GM12878 (cell line): ENCODE measurements at regions of chr6 and their contacts with region 1.

Region 1: DNA sequence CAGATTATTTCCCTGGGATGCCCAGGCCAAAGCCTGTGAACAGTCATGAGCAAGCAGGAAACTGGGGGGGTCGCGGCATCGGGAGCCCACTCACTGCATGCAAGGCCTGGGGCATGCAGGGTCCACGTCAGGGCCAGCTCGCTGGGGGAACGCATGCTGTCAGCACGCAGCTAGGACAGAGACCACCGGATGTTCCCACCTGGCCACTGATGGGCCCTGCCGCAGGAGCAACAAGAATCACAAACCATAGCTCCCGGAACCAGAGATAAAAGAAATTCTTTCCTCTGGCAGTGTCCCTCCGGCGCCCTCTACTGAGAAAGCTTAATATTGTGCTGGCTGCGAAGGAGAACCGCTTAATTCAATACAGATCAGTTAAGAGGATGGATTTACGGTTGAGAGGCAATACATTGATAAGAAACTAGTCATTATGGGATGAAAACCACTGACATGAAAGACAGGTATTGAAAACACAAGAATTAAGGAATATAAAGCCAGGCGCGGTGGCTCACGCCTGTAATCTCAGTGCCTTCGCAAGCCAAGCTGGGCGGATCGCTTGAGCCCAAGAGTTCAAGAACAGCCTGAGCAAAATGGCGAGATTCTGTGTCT is 32.6 kb downstream of the C6orf15 start:
- DNase-seq: no peak
- ATAC-seq: peak; percentile 87
- H3K4me3 ChIP-seq: no peak overlapping the region
- H3K27ac ChIP-seq: no peak overlapping the region
- H3K4me1 ChIP-seq: no peaks in the 10 kb centered on the region
- H3K27me3 ChIP-seq: no peaks in the 10 kb centered on the region
- CTCF ChIP-seq: peak; percentile 74 to 85 (median 79)
- EP300 ChIP-seq: no peak
- POLR2A ChIP-seq: no peak
- RAD21 ChIP-seq: peak; percentile 85

Region 2: GRCh38 chr6:31058128-31058894 is 21.4 kb before region 1 on chr6:
- CTCF ChIA-PET with region 1: interaction called, 27 read pairs
- POLR2A ChIA-PET with region 1: no interaction called
- RAD21 ChIA-PET with region 1: no interaction called
- SMC1A ChIA-PET with region 1: interaction called, 4 read pairs
- in situ Hi-C with region 1: no loop called
- intact Hi-C with region 1: no loop called
- DNase-seq: no peak
- ATAC-seq: peak; percentile 68
- H3K4me3 ChIP-seq: no peak overlapping the region
- H3K27ac ChIP-seq: no peak overlapping the region
- H3K4me1 ChIP-seq: no peaks in the 10 kb centered on the region
- H3K27me3 ChIP-seq: no peaks in the 10 kb centered on the region; a peak in 1 of 4 replicates
- CTCF ChIP-seq: peak; percentile 42 to 57 (median 53)
- EP300 ChIP-seq: no peak
- POLR2A ChIP-seq: no peak
- RAD21 ChIP-seq: no peak

Region 3: DNA sequence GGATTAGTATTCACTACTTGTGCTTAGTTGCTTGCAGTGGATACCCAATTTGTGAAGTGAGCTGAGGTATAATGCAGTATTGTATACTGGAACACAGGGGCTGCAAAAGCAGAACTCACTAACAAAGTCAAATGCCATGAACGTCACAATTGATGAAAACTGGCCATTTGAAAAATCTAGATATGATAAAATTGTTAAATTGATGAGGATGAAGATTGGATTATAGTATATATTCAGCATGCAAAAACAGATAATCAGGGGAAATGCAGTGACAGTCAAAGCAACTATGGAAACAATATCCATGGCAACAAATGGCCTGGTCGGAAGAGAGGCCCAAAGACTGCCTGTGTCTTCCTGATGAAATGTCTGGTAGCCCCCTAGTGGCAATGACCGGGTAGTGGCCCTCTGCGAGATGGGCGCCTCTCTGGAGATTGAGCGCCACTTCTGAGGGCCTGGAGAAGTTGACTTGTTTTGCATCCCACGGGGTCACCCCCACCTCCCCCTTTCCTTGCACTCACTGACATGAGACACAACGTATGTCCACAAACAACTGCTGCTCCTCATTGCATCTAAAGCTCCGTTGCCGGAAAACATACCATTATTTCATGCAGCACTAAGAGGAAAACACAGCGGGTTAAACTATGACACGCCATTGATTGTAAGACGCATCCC is 11.0 kb before region 1 on chr6:
- CTCF ChIA-PET with region 1: interaction called, 29 read pairs
- POLR2A ChIA-PET with region 1: interaction called, 4 read pairs
- RAD21 ChIA-PET with region 1: interaction called, 13 read pairs
- SMC1A ChIA-PET with region 1: interaction called, 15 read pairs
- in situ Hi-C with region 1: no loop called
- intact Hi-C with region 1: no loop called
- DNase-seq: no peak
- ATAC-seq: peak; percentile 99
- H3K4me3 ChIP-seq: no peak overlapping the region
- H3K27ac ChIP-seq: no peak overlapping the region
- H3K4me1 ChIP-seq: no peaks in the 10 kb centered on the region; the same call in 1 of the 2 replicates
- H3K27me3 ChIP-seq: no peaks in the 10 kb centered on the region
- CTCF ChIP-seq: peak; percentile 89 to 93 (median 90); a peak in 5 of 6 replicates
- EP300 ChIP-seq: no peak
- POLR2A ChIP-seq: no peak
- RAD21 ChIP-seq: peak; percentile 76

Region 4: DNA sequence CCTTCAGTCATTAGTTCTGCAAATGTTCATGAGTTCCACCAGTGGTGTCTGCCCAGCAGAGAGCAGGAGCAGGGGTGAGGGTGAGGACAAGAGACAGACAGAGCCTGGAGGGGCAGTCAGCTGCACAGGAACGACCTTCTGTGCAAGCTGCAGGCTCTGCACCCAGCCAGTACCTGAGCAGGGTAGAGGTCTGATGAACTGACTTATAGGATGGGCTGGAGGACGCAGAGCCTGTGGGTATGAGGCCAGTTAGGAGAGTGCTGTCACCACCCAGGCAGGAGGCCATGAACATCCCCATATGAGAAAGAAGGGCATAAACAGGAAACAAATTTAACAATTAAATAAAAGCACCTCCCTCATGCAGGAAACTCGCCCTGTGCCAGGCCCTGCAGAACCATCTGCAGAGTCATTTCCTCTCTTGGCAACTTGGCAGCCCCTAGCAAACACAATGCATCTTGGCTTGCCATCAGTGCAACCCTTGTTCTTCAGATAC is 14.7 kb after region 1 on chr6:
- CTCF ChIA-PET with region 1: interaction called, 30 read pairs
- POLR2A ChIA-PET with region 1: no interaction called
- RAD21 ChIA-PET with region 1: interaction called, 6 read pairs
- SMC1A ChIA-PET with region 1: interaction called, 7 read pairs
- in situ Hi-C with region 1: no loop called
- intact Hi-C with region 1: no loop called
- DNase-seq: no peak
- ATAC-seq: no peak
- H3K4me3 ChIP-seq: no peak overlapping the region
- H3K27ac ChIP-seq: no peak overlapping the region
- H3K4me1 ChIP-seq: no peaks in the 10 kb centered on the region
- H3K27me3 ChIP-seq: peaks cover 0 to 2% of the 10 kb centered on the region in 2 experiments; a peak in 2 of 4 replicates
- CTCF ChIP-seq: no peak
- EP300 ChIP-seq: no peak
- POLR2A ChIP-seq: no peak
- RAD21 ChIP-seq: no peak

Region 5: DNA sequence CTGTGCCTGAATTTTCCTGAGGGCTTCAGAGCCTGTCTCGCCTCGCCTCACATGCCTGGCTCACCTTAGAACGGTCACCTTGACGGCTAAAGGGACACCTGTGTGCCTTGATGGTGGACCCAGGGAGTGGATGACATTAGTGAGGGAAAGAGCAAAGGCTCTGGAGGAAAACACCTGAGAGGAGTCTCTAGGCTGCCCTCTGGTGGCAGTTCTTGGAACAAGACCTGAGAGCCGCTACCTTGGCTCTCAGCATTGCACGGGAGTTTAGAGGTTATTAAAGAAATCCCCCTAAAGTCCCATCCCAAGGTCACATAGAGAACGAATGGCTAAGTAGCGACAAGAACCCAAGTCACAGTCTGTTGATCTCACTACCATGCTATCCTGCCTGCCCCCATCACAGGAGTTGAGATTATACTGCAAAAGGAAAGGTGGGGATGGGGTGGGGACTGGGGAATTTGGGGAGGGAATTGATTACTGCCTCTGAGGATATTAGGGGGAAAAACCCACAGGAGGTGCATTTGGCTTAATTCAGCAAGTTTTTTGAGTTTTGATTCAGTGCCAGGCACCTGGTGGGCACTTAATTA is 48.4 kb after region 1 on chr6:
- CTCF ChIA-PET with region 1: interaction called, 12 read pairs
- POLR2A ChIA-PET with region 1: no interaction called
- RAD21 ChIA-PET with region 1: no interaction called
- SMC1A ChIA-PET with region 1: interaction called, 5 read pairs
- in situ Hi-C with region 1: no loop called
- intact Hi-C with region 1: no loop called
- DNase-seq: peak; percentile 13
- ATAC-seq: peak; percentile 81
- H3K4me3 ChIP-seq: no peak overlapping the region
- H3K27ac ChIP-seq: no peak overlapping the region
- H3K4me1 ChIP-seq: no peaks in the 10 kb centered on the region; the same call in 1 of the 2 replicates
- H3K27me3 ChIP-seq: no peaks in the 10 kb centered on the region; a peak in 4 of 4 replicates
- CTCF ChIP-seq: peak; percentile 80 to 90 (median 82)
- EP300 ChIP-seq: no peak
- POLR2A ChIP-seq: no peak
- RAD21 ChIP-seq: peak; percentile 30; the same call in 1 of the 2 replicates

Region 6: DNA sequence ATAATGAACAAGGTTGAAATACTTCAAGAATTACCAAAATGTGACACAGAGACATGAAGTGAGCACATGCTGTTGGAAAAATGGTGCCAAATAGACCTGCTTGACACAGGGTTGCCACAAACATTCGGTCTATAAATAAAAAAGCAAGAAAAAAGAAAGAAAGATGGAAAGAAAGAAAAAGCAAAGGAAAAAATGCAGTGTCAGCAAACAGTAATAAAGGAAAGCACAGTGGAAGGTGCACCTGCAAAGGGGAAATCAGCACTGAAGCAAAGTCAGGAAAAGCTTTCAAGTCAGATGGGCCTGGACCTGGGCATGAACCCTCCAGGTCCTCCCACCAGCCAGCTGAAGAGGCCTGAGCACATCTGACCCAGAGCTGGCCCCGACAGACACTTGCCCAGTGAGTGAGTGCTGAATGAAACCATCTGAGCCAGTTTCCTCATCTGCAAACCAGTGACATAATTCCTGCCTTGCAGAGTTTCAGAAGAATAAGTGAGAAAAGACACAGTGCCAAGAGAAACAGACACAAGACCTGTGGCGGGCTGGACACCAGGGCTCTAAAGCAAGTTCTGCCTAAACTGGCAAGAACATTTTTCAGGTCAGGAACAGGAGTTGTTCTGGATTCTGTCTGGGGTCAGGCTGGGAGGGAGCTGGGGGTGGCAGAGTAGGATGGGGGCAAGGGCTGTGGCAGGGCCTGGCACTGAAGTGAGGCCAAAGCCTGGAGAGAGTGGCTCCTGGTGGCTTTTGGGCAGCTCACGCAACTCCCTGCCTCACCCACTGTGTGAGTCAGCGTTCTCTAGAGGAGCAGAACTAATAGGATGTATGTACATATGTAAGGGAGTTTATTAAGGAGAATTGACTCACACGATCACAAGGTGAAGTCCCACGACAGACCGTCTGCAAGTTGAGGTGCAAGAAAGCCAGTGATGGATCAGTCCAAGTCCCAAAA is 394.3 kb after region 1 on chr6:
- CTCF ChIA-PET with region 1: no interaction called
- POLR2A ChIA-PET with region 1: no interaction called
- RAD21 ChIA-PET with region 1: no interaction called
- SMC1A ChIA-PET with region 1: no interaction called
- in situ Hi-C with region 1: no loop called
- intact Hi-C with region 1: no loop called
- DNase-seq: no peak
- ATAC-seq: no peak
- H3K4me3 ChIP-seq: no peak overlapping the region
- H3K27ac ChIP-seq: no peak overlapping the region
- H3K4me1 ChIP-seq: peaks cover 4% of the 10 kb centered on the region; the same call in 1 of the 2 replicates
- H3K27me3 ChIP-seq: no peaks in the 10 kb centered on the region
- CTCF ChIP-seq: no peak
- EP300 ChIP-seq: no peak
- POLR2A ChIP-seq: no peak
- RAD21 ChIP-seq: no peak